Gastrocnemius medialis (tissue), 4 donors: ENCODE measurements at regions of chrX and their contacts with region 1.

Region 1: DNA sequence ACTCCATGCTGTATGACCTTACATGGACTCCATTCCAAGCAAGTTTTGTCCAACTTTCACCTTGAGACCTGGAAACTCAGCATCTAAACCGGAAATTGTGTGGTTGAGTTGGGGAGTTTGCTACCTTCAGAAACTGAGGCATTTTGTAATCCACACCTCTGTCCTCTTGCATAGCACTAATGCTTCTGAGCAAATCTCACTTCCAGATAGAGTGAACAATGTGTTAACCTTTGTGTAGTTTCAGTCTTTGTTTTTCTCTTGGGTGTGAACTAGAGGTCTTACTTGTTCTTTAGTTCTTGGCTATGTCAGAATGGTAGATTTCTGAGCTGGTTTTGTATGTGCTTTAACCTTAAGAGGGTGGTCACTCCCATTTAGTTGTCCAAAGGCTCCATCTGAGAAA is 48.1 kb upstream of the TCEAL2 start:
- DNase-seq: no peak
- ATAC-seq: no peak
- H3K4me3 ChIP-seq: no peak overlapping the region
- H3K27ac ChIP-seq: no peak overlapping the region
- H3K4me1 ChIP-seq: no peaks in the 10 kb centered on the region
- H3K27me3 ChIP-seq: peaks cover 0 to 8% (median 0%) of the 10 kb centered on the region in 3 donors
- CTCF ChIP-seq: no peak
- POLR2A ChIP-seq: no peak

Region 2: DNA sequence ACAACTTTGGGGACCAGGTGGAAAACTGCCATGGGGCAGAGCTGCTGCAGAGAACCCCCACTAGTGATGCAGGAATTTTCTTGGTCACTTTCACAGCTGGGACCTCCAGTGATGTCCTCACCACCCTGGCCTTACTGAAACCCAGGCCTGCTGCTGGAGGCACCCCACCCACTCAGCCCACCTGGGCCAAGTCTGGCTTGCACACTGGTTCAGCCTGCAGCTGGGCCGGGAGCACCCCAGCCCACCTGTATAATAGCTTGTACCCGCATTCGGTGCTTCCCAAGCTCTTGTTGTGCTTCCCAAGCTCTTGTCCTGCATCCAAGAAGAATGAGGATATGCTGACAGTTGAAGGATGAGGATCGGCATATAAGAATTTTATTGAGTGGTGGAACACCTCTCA is 59.2 kb before region 1 on chrX:
- in situ Hi-C with region 1: no loop called
- intact Hi-C with region 1: loop called (anchors 10 kb)
- DNase-seq: no peak
- ATAC-seq: no peak
- H3K4me3 ChIP-seq: no peak overlapping the region
- H3K27ac ChIP-seq: no peak overlapping the region
- H3K4me1 ChIP-seq: no peaks in the 10 kb centered on the region
- H3K27me3 ChIP-seq: no peaks in the 10 kb centered on the region
- CTCF ChIP-seq: no peak
- POLR2A ChIP-seq: no peak